Ascending aorta (tissue), 2 donors: ENCODE measurements at regions of chr1 and their contacts with region 1.

Region 1: DNA sequence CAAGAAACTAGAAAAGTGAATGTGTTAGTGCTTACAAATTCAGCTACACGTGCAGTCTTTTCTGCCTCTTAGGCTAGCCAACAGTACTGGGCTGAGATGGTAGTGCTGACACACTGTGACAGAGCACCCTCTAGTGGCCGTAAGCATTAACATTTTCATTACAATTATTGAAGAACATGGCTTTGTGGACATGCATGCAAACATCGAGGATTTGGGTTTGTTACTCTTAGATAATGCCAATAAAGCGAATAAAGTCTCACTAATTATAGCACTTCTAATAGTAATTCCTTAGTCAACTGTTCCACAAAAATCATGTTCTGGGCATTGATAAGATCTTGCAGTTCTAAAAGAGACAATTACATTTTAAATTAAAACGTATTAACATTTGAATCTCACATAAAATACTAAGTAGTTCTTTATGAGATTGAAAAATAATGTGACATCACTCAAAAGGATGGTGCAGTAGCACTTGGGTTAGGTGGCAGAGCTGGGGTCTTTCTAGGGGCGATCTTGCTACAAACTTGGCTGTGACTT is 47.1 kb downstream of the MYSM1 start:
- DNase-seq: peak in 1 of 2 donors; percentile 70
- H3K4me3 ChIP-seq: no peak overlapping the region
- H3K27ac ChIP-seq: no peak overlapping the region
- H3K4me1 ChIP-seq: no peaks in the 10 kb centered on the region
- H3K27me3 ChIP-seq: no peaks in the 10 kb centered on the region
- CTCF ChIP-seq: peak; percentile 66 to 81 (median 75)

Region 2: GRCh38 chr1:58204284-58204683 is 448.4 kb before region 1 on chr1:
- intact Hi-C with region 1: no loop called
- DNase-seq: no peak
- H3K4me3 ChIP-seq: no peak overlapping the region
- H3K27ac ChIP-seq: no peak overlapping the region
- H3K4me1 ChIP-seq: no peaks in the 10 kb centered on the region
- H3K27me3 ChIP-seq: no peaks in the 10 kb centered on the region
- CTCF ChIP-seq: no peak

Region 3: DNA sequence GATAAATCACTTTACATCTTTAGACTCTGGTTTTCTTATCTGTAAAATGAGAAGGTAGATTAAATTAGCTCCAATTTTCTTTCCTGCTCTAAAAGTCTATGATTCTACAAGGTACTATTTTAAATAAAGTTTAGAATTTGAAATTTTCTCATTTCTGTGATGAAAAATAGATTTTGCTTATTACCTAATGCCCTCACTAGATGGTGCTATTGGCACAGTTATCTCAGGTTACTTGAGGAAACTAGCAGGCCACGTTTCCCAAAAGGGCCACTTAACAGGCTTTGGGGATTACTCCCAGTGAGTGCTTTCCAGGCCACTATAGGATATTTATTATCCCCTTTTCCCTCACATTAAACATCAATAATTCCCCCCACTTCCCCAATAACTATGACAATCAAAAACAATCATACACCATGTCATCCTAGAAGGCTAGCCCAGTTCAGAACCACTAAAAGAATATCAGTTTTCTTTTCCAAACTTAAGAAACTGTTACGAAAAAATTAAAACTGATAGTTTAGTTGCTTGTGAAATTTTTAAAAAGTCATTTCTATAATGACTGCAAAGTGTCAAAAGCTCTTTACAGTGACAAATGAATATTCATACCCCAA is 136.8 kb before region 1 on chr1:
- intact Hi-C with region 1: loop called (anchors 1 kb)
- DNase-seq: peak in 1 of 2 donors; percentile 66
- H3K4me3 ChIP-seq: no peak overlapping the region
- H3K27ac ChIP-seq: no peak overlapping the region
- H3K4me1 ChIP-seq: no peaks in the 10 kb centered on the region
- H3K27me3 ChIP-seq: no peaks in the 10 kb centered on the region
- CTCF ChIP-seq: peak; percentile 52 to 72 (median 67)

Region 4: GRCh38 chr1:58568271-58568860 is 84.4 kb before region 1 on chr1:
- intact Hi-C with region 1: loop called (anchors 5 kb)
- DNase-seq: no peak
- H3K4me3 ChIP-seq: no peak overlapping the region
- H3K27ac ChIP-seq: no peak overlapping the region
- H3K4me1 ChIP-seq: no peaks in the 10 kb centered on the region
- H3K27me3 ChIP-seq: no peaks in the 10 kb centered on the region
- CTCF ChIP-seq: no peak

Region 5: DNA sequence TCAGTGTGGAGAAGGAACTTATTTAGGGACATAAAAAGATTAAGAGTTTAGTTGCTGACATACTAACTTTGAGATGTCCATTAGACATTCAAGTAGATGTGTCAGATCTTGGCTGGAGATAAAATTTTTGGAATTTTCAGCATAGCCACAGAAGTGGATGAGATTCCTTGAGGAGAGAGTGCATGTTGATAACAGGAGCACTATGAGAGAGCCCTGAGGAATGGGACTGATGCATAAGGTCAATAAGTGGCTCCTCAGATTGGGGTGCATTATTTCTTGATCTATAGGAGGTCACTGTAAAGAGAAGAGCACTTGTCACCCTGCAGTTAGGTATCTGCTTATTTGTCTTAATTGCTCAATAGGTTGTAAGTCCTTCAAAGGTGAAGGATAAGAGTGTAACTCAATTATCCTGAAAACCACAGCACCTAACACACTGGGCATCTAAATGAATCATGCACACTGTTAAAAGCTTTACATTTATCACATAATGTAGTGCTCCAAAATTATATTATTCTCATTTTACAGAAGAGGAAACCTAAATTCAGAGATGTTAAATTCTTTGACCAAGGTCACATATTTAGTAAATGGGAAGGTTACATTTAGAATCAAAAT is 23.6 kb before region 1 on chr1:
- intact Hi-C with region 1: no loop called
- DNase-seq: no peak
- H3K4me3 ChIP-seq: no peak overlapping the region
- H3K27ac ChIP-seq: no peak overlapping the region
- H3K4me1 ChIP-seq: no peaks in the 10 kb centered on the region
- H3K27me3 ChIP-seq: no peaks in the 10 kb centered on the region
- CTCF ChIP-seq: no peak